Naive thymus-derived CD4-positive, alpha-beta T cell (primary cell): ENCODE measurements at regions of chrX and their contacts with region 1.

Region 1: GRCh38 chrX:30889147-30890140 is at the start of gene TAB3:
- DNase-seq: peak; percentile 82 to 96 (median 93)
- ATAC-seq: peak; percentile 94
- H3K4me3 ChIP-seq: peak within 1 kb of the TSS; percentile 81
- H3K4me3 Mint-ChIP-seq: peak within 1 kb of the TSS; percentile 81 to 96 (median 90)
- H3K27ac ChIP-seq: peak within 1 kb of the TSS; percentile 82
- H3K27ac Mint-ChIP-seq: peak within 1 kb of the TSS; percentile 89 to 97 (median 95)
- H3K4me1 ChIP-seq: peaks cover 0 to 6% of the 10 kb centered on the region in 2 donors
- H3K4me1 Mint-ChIP-seq: peaks cover 9 to 44% (median 31%) of the 10 kb centered on the region in 7 donors
- H3K27me3 ChIP-seq: no peaks in the 10 kb centered on the region
- H3K27me3 Mint-ChIP-seq: no peaks in the 10 kb centered on the region
- total RNA-seq, gene TAB3: 17.5 to 24.8 (median 20.8) TPM

Region 2: GRCh38 chrX:30039768-30040167 is 849.7 kb before region 1 on chrX:
- CTCF ChIA-PET with region 1: no interaction called
- POLR2A ChIA-PET with region 1: no interaction called
- intact Hi-C with region 1: no loop called
- DNase-seq: no peak
- ATAC-seq: no peak
- H3K4me3 ChIP-seq: no peak overlapping the region
- H3K4me3 Mint-ChIP-seq: no peak overlapping the region
- H3K27ac ChIP-seq: no peak overlapping the region
- H3K27ac Mint-ChIP-seq: no peak overlapping the region
- H3K4me1 ChIP-seq: no peaks in the 10 kb centered on the region
- H3K4me1 Mint-ChIP-seq: no peaks in the 10 kb centered on the region
- H3K27me3 ChIP-seq: no peaks in the 10 kb centered on the region
- H3K27me3 Mint-ChIP-seq: no peaks in the 10 kb centered on the region

Region 3: GRCh38 chrX:30577362-30577991 is 312.0 kb before region 1 on chrX and contains the start of gene TASL:
- CTCF ChIA-PET with region 1: no interaction called
- POLR2A ChIA-PET with region 1: interaction called, 5 read pairs
- intact Hi-C with region 1: loop called (anchors 1 kb)
- DNase-seq: peak in 8 of 9 donors; percentile 23 to 53 (median 30)
- ATAC-seq: peak; percentile 85
- H3K4me3 ChIP-seq: peak within 1 kb of the TSS; percentile 58
- H3K4me3 Mint-ChIP-seq: peak within 1 kb of the TSS; percentile 82 to 96 (median 88)
- H3K27ac ChIP-seq: peak within 1 kb of the TSS; percentile 65
- H3K27ac Mint-ChIP-seq: peak within 1 kb of the TSS; percentile 88 to 99 (median 96)
- H3K4me1 ChIP-seq: no peaks in the 10 kb centered on the region
- H3K4me1 Mint-ChIP-seq: peaks cover 0 to 24% (median 18%) of the 10 kb centered on the region in 7 donors
- H3K27me3 ChIP-seq: no peaks in the 10 kb centered on the region
- H3K27me3 Mint-ChIP-seq: no peaks in the 10 kb centered on the region
- total RNA-seq, gene TASL: 2.1 to 10.5 (median 4.6) TPM

Region 4: DNA sequence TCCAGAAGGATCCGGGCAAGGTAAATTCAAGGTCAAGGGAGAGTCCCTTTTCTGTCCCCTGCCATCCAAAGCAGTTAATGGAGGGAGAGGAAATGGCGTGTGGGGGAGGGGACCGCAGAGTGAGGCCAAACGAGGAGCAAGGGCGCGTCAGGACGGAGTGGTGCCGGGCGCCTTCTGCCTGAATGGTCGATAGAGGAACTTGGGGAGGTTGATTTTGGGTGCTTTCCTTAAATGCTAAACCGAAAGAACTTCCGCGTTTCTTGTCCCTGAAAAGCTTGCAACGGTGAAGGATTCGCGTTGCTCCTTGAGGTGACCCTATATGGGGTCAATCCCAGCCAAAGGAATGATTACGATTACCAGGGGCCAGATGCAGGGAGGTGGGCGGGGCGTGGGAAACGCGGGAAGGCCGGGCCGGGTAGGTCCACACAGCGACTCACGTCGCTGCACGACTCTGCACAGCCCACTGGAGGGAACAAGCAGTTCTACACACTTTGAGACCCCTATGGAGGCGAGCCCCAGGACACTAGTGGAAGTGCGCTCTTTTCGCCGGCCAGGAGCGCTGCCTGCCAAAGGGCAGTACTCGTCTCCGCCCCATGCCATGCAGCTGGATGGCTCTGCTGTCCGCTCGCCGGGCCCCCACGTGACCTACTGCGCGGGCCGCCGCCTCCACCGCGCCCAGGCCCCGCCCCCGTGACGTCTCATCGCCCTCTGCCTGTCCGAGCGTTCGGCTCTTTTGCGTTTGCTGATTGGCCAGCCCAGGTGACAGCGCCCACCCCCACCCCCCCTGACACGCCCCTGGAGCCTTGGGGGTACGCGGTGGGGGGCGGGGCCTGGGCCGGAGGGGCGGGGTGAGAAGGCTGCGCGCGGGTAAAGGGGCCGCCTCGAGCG is 236.7 kb before region 1 on chrX:
- CTCF ChIA-PET with region 1: no interaction called
- POLR2A ChIA-PET with region 1: no interaction called
- intact Hi-C with region 1: loop called (anchors 1 kb)
- DNase-seq: peak; percentile 82 to 93 (median 86)
- ATAC-seq: peak; percentile 94
- H3K4me3 ChIP-seq: peak overlapping the region; percentile 88
- H3K4me3 Mint-ChIP-seq: peak overlapping the region; percentile 71 to 95 (median 90)
- H3K27ac ChIP-seq: peak overlapping the region; percentile 80
- H3K27ac Mint-ChIP-seq: peak overlapping the region; percentile 86 to 98 (median 90)
- H3K4me1 ChIP-seq: no peaks in the 10 kb centered on the region
- H3K4me1 Mint-ChIP-seq: peaks cover 0 to 45% (median 16%) of the 10 kb centered on the region in 7 donors
- H3K27me3 ChIP-seq: no peaks in the 10 kb centered on the region
- H3K27me3 Mint-ChIP-seq: no peaks in the 10 kb centered on the region

Region 5: DNA sequence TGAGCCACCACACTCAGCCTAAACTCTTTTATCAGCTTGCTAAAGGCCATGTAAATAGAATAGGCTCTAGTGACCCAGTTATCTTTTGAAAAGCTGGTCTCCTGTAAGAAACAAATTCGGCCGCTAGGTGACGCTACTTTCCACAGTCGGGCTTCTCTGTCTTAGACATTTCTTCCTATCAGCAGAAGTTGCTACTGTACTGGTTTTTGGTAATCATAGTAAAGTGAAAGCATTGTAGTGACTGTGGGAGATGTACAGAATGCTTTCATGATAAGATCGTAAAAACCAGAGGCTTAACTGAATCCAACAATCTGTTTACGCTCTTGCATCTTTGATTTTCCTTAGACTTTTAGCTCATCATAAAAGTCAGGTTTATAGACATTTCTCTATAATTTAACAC is 153.6 kb before region 1 on chrX:
- CTCF ChIA-PET with region 1: no interaction called
- POLR2A ChIA-PET with region 1: interaction called, 7 read pairs
- intact Hi-C with region 1: loop called in 1 of 2 experiments (anchors 2 kb)
- DNase-seq: peak; percentile 34 to 73 (median 59)
- ATAC-seq: peak; percentile 78
- H3K4me3 ChIP-seq: no peak overlapping the region
- H3K4me3 Mint-ChIP-seq: peak overlapping the region in 4 of 10 donors; percentile 22 to 69 (median 37)
- H3K27ac ChIP-seq: no peak overlapping the region
- H3K27ac Mint-ChIP-seq: no peak overlapping the region
- H3K4me1 ChIP-seq: no peaks in the 10 kb centered on the region
- H3K4me1 Mint-ChIP-seq: peaks cover 0 to 5% (median 0%) of the 10 kb centered on the region in 7 donors
- H3K27me3 ChIP-seq: no peaks in the 10 kb centered on the region
- H3K27me3 Mint-ChIP-seq: no peaks in the 10 kb centered on the region

Region 6: DNA sequence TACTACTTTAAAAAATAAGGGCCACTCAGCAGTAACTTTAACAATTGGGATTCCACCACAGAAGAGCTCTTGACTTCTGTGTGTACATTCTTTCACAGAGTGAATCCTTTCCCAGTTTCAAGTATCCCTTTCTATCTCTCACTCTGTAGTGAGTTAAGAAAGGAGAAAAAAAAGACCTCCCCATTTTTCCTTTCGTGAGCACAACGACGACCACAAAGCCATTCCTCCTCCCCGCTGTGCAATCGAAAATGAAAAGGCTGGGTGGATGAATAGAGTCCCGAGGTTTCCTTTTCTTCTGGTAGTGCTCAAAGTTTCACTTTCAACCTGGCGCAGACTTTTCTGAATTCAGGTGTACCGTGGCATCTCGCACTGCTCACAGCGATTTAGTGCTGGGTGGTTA is 58.4 kb before region 1 on chrX:
- CTCF ChIA-PET with region 1: no interaction called
- POLR2A ChIA-PET with region 1: interaction called, 5 read pairs
- intact Hi-C with region 1: loop called (anchors 1 to 2 kb)
- DNase-seq: peak in 8 of 9 donors; percentile 11 to 34 (median 22)
- ATAC-seq: peak; percentile 55
- H3K4me3 ChIP-seq: no peak overlapping the region
- H3K4me3 Mint-ChIP-seq: peak overlapping the region; percentile 72 to 86 (median 82)
- H3K27ac ChIP-seq: peak overlapping the region; percentile 64
- H3K27ac Mint-ChIP-seq: peak overlapping the region; percentile 84 to 95 (median 93)
- H3K4me1 ChIP-seq: no peaks in the 10 kb centered on the region
- H3K4me1 Mint-ChIP-seq: peaks cover 8 to 49% (median 38%) of the 10 kb centered on the region in 7 donors
- H3K27me3 ChIP-seq: no peaks in the 10 kb centered on the region
- H3K27me3 Mint-ChIP-seq: no peaks in the 10 kb centered on the region

Region 7: GRCh38 chrX:30875961-30876360 is 13.5 kb before region 1 on chrX:
- CTCF ChIA-PET with region 1: no interaction called
- POLR2A ChIA-PET with region 1: no interaction called
- intact Hi-C with region 1: loop called in 1 of 2 experiments (anchors 2 kb)
- DNase-seq: no peak
- ATAC-seq: no peak
- H3K4me3 ChIP-seq: no peak overlapping the region
- H3K4me3 Mint-ChIP-seq: no peak overlapping the region
- H3K27ac ChIP-seq: no peak overlapping the region
- H3K27ac Mint-ChIP-seq: no peak overlapping the region
- H3K4me1 ChIP-seq: no peaks in the 10 kb centered on the region
- H3K4me1 Mint-ChIP-seq: peaks cover 16 to 62% (median 51%) of the 10 kb centered on the region in 7 donors
- H3K27me3 ChIP-seq: no peaks in the 10 kb centered on the region
- H3K27me3 Mint-ChIP-seq: no peaks in the 10 kb centered on the region

Region 8: DNA sequence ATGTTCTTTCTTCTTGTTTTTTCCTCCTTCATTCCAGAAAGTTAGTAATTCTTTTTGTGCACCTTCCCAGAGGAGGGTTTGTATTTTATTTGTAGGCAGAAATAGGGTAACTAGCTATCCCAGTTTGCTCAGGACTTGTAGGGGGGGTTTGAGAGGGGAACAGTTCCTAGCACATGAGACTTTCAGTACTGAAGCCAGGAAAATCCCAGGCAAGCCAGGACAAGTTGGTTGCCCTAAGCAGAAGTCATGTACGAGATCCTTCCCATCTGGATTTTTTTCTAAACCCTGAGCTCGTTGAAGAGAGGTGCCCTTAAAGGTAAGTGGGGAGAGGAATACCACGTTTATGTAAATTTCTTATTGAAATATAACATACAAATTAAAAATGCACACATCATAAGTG is 15.2 kb after region 1 on chrX:
- CTCF ChIA-PET with region 1: no interaction called
- POLR2A ChIA-PET with region 1: no interaction called
- intact Hi-C with region 1: no loop called
- DNase-seq: no peak
- ATAC-seq: no peak
- H3K4me3 ChIP-seq: no peak overlapping the region
- H3K4me3 Mint-ChIP-seq: no peak overlapping the region
- H3K27ac ChIP-seq: no peak overlapping the region
- H3K27ac Mint-ChIP-seq: no peak overlapping the region
- H3K4me1 ChIP-seq: no peaks in the 10 kb centered on the region
- H3K4me1 Mint-ChIP-seq: peaks cover 0 to 9% (median 3%) of the 10 kb centered on the region in 7 donors
- H3K27me3 ChIP-seq: no peaks in the 10 kb centered on the region
- H3K27me3 Mint-ChIP-seq: peaks cover 0 to 16% (median 0%) of the 10 kb centered on the region in 5 donors

Region 9: DNA sequence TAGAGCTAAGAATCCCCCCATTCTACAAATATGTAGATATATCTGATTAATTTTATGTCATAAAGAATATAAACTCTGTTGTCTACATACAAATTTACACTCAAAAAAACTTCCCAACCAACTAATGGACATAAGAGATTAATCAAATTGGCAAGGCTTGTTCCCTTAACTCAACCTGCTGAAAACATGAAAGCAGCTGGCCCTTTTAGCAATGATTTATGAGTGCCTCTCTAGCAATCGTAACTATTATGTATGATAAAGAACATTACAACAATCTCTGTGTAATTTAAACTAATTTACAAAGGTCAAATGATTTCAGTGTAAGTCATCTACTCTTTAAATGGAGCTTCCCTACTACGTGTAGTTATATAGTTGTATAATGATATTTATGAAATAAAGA is 265.5 kb after region 1 on chrX:
- CTCF ChIA-PET with region 1: no interaction called
- POLR2A ChIA-PET with region 1: no interaction called
- intact Hi-C with region 1: no loop called
- DNase-seq: no peak
- ATAC-seq: no peak
- H3K4me3 ChIP-seq: no peak overlapping the region
- H3K4me3 Mint-ChIP-seq: no peak overlapping the region
- H3K27ac ChIP-seq: no peak overlapping the region
- H3K27ac Mint-ChIP-seq: no peak overlapping the region
- H3K4me1 ChIP-seq: no peaks in the 10 kb centered on the region
- H3K4me1 Mint-ChIP-seq: no peaks in the 10 kb centered on the region
- H3K27me3 ChIP-seq: no peaks in the 10 kb centered on the region
- H3K27me3 Mint-ChIP-seq: no peaks in the 10 kb centered on the region

Region 10: DNA sequence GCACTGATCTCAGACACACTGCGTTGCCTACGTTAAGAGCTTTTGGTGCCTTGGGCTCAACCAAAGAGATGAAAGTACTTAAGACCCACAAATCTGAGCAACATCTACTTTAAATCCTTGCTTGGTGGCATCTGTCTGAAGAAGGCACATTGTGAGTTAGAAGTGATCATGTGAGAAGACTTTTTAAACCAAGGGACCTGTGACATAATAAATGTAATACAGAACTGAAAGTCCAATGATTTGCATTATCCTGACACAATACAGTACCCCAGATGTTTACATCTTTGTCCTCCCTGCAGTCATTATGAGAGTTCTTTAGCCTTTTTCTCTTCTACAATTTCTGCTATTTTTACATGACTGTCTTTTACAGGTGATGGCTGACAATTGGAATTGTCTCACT is 279.1 kb after region 1 on chrX:
- CTCF ChIA-PET with region 1: no interaction called
- POLR2A ChIA-PET with region 1: no interaction called
- intact Hi-C with region 1: no loop called
- DNase-seq: no peak
- ATAC-seq: no peak
- H3K4me3 ChIP-seq: no peak overlapping the region
- H3K4me3 Mint-ChIP-seq: no peak overlapping the region
- H3K27ac ChIP-seq: no peak overlapping the region
- H3K27ac Mint-ChIP-seq: no peak overlapping the region
- H3K4me1 ChIP-seq: no peaks in the 10 kb centered on the region
- H3K4me1 Mint-ChIP-seq: no peaks in the 10 kb centered on the region
- H3K27me3 ChIP-seq: no peaks in the 10 kb centered on the region
- H3K27me3 Mint-ChIP-seq: peaks cover 3 to 18% (median 4%) of the 10 kb centered on the region in 5 donors